ENCODE measurements at regions of chr9 and their contacts with region 1.

Region 1: DNA sequence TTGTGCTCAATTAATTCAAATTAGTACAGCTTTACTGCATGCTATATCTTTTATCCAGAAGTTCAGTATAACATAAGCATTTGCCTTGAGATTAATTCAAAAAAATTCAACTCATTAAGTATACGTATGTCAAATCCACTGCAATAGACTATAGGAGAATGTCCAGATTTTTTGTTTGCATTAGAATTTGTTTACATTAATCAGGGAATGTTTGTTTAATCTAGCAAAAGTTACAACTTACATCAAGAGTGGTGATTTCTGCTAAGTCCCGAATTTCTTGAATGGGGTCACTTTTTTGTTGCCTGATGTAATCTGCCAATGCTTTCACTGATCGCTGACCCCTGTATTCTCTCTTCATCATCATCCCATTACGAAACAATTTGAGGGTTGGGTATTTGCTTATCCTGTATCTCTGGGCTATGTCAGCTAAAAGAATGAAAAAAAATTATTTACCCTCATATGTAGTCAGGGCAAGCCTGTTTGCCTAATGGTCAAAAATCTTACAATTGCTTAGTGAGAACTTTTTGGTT is 76.9 kb downstream of the ERP44 start:
- DNase-seq: no peak
- H3K4me3 ChIP-seq: no peak overlapping the region
- H3K27ac ChIP-seq: no peak overlapping the region
- H3K4me1 ChIP-seq: no peaks in the 10 kb centered on the region
- H3K27me3 ChIP-seq: no peaks in the 10 kb centered on the region
- CTCF ChIP-seq: no peak
- POLR2A ChIP-seq: no peak

Region 2: GRCh38 chr9:100216178-100216787 is 194.4 kb after region 1 on chr9:
- intact Hi-C with region 1: loop called (anchors 1 kb)
- DNase-seq: no peak
- H3K4me3 ChIP-seq: no peak overlapping the region
- H3K27ac ChIP-seq: no peak overlapping the region
- H3K4me1 ChIP-seq: no peaks in the 10 kb centered on the region
- H3K27me3 ChIP-seq: no peaks in the 10 kb centered on the region
- CTCF ChIP-seq: peak; percentile 7 to 34 (median 33)
- POLR2A ChIP-seq: no peak

Measured in vagina (tissue), 2 donors.